K562 (cell line): ENCODE measurements at regions of chr15 and their contacts with region 1.

Region 1: DNA sequence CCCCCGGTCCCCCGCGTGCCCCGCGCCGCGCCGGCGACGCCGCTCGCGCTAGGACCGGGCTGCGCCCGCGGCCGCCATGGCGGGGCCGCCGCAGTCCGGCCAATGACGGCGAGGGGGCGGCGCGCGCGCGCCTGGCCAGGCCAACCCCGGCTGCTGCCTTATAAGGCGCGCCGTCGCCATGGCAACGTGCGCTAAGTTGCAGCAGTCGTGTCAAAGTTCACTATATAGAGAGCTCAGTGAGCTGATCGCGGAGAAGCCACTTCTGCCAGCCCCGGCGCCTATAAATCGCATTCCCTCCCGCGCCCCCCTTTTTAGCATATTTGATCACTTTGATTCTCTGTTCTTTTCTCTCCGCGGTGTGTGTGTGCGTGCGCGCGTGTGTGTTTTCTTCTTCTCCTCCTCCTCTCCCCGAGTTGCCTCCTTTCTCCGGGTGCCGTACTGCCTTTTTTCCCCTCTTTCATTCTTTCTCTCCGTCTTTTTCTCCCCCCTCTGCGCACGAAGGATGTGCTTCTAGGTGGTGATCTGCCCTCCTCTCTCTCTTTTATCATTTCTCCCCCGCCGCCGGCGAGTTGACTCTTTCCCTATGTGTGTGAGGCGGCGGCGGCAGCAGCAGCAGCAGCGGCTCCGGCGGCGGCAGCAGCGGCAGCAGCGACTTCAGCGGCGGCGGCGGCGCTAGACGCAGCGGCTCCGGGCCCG is at the start of gene NR2F2:
- DNase-seq: peak; percentile 93 to 99 (median 96)
- ATAC-seq: peak; percentile 68
- H3K4me3 ChIP-seq: peak within 1 kb of the TSS; percentile 71
- H3K27ac ChIP-seq: peak within 1 kb of the TSS; percentile 94
- H3K4me1 ChIP-seq: peaks cover 29 to 36% of the 10 kb centered on the region in 2 experiments
- H3K27me3 ChIP-seq: no peaks in the 10 kb centered on the region
- CTCF ChIP-seq: no peak
- EP300 ChIP-seq: no peak; the same call in 1 of the 2 replicates
- POLR2A ChIP-seq: peak; percentile 86
- RAD21 ChIP-seq: 0 out of 4 replicates have a peak, but pooled peaks of 1 of the 2 experiments have one; percentile 12
- polyA plus RNA-seq, gene NR2F2: 9.7 to 11.1 TPM

Region 2: DNA sequence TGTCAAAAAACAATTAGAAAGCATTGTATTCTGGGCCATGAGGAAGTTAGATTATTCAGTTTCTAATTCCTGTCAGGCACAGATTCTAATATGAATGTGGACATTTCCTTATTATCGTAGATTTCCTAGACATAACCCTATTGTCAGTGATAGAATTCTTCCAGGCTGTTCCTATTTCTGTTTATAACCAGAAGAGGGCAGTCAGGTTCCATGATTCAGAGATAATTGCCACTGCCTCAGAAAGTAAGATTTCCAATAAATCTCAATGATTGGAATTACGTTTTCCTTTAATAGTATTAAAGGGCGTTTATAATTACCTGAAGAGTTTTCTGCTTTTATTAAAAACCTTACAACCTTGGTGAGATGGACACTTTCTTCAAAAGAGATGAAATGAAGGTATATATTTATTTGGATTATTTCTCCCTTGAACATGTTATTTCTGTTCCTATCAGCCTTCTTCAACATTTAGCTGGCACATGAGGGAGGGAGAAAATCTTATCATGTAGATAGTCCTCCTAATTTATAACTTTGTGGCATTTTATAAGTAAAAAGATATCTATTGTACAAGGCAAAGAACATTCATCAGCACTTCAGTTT is 1660.1 kb before region 1 on chr15:
- CTCF ChIA-PET with region 1: no interaction called
- POLR2A ChIA-PET with region 1: no interaction called
- in situ Hi-C with region 1: no loop called
- intact Hi-C with region 1: loop called (anchors 10 kb)
- DNase-seq: peak; percentile 30 to 66 (median 44)
- ATAC-seq: peak; percentile 78
- H3K4me3 ChIP-seq: no peak overlapping the region
- H3K27ac ChIP-seq: no peak overlapping the region
- H3K4me1 ChIP-seq: no peaks in the 10 kb centered on the region; a peak in 1 of 5 replicates
- H3K27me3 ChIP-seq: peaks cover 4 to 28% of the 10 kb centered on the region in 2 experiments; a peak in 4 of 5 replicates
- CTCF ChIP-seq: peak; percentile 35 to 80 (median 54); a peak in 4 of 6 replicates
- EP300 ChIP-seq: no peak
- POLR2A ChIP-seq: no peak
- RAD21 ChIP-seq: peak; percentile 84 to 91

Region 3: GRCh38 chr15:95929232-95929846 is 401.3 kb before region 1 on chr15:
- CTCF ChIA-PET with region 1: no interaction called
- POLR2A ChIA-PET with region 1: interaction called, 5 read pairs
- in situ Hi-C with region 1: loop called (anchors 10 kb)
- intact Hi-C with region 1: loop called (anchors 2 kb)
- DNase-seq: peak; percentile 86 to 96 (median 86)
- ATAC-seq: peak; percentile 90
- H3K4me3 ChIP-seq: no peak overlapping the region
- H3K27ac ChIP-seq: peak overlapping the region; percentile 81
- H3K4me1 ChIP-seq: peaks cover 0 to 42% of the 10 kb centered on the region in 2 experiments; a peak in 4 of 5 replicates
- H3K27me3 ChIP-seq: no peaks in the 10 kb centered on the region
- CTCF ChIP-seq: no peak
- EP300 ChIP-seq: peak; percentile 99
- POLR2A ChIP-seq: no peak
- RAD21 ChIP-seq: peak; percentile 57 to 62

Region 4: DNA sequence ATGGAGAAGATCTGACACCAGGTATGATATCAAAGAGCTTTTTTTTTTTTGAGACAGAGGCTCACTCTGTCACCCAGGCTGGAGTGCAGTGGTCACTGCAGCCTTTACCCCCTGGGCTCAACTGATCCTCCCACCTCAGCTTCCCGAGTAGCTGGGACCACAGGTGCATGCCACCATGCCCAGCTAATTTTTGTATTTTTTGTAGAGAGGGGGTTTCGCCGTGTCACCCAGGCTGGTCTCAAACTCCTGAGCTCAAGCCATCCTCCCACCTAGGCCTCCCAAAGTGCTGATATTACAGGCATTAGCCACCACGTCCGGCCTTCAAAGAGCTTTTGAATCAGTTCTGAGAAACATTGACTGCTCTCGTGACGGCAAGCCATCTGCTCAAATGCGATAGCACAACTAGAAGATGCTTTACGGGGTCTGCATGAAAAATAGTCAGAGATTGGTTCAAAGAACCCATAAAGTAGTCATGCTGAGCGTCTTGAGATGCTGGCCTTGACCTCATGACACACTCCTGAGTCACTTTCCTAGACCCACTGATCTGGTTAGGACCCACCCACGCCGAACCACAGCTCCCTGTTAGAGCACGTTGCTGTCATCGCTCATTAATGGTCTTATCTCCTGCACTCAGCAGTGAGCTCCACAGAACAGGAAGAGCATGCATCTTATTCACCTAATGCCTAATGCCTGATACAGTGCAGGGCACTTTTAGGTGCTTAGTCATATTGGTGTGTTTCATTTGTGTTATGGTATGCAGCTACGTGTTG is 57.1 kb before region 1 on chr15:
- CTCF ChIA-PET with region 1: no interaction called
- POLR2A ChIA-PET with region 1: interaction called, 5 read pairs
- in situ Hi-C with region 1: no loop called
- intact Hi-C with region 1: loop called (anchors 1 kb)
- DNase-seq: peak; percentile 93 to 99 (median 93)
- ATAC-seq: peak; percentile 98
- H3K4me3 ChIP-seq: no peak overlapping the region
- H3K27ac ChIP-seq: peak overlapping the region; percentile 93
- H3K4me1 ChIP-seq: peaks cover 11 to 30% of the 10 kb centered on the region in 2 experiments
- H3K27me3 ChIP-seq: no peaks in the 10 kb centered on the region
- CTCF ChIP-seq: no peak
- EP300 ChIP-seq: peak; percentile 93
- POLR2A ChIP-seq: no peak
- RAD21 ChIP-seq: peak in 1 of 2 experiments; percentile 16; a peak in 2 of 4 replicates

Region 5: GRCh38 chr15:96421178-96421601 is 90.6 kb after region 1 on chr15:
- CTCF ChIA-PET with region 1: no interaction called
- POLR2A ChIA-PET with region 1: no interaction called
- in situ Hi-C with region 1: no loop called
- intact Hi-C with region 1: loop called (anchors 5 kb)
- DNase-seq: peak in 2 of 4 experiments; percentile 32 to 63
- ATAC-seq: peak; percentile 73
- H3K4me3 ChIP-seq: no peak overlapping the region
- H3K27ac ChIP-seq: peak overlapping the region; percentile 11; the same call in 1 of the 3 replicates
- H3K4me1 ChIP-seq: peaks cover 11 to 15% of the 10 kb centered on the region in 2 experiments; a peak in 4 of 5 replicates
- H3K27me3 ChIP-seq: peaks cover 2 to 12% of the 10 kb centered on the region in 2 experiments; a peak in 4 of 5 replicates
- CTCF ChIP-seq: no peak
- EP300 ChIP-seq: no peak
- POLR2A ChIP-seq: no peak
- RAD21 ChIP-seq: no peak

Region 6: DNA sequence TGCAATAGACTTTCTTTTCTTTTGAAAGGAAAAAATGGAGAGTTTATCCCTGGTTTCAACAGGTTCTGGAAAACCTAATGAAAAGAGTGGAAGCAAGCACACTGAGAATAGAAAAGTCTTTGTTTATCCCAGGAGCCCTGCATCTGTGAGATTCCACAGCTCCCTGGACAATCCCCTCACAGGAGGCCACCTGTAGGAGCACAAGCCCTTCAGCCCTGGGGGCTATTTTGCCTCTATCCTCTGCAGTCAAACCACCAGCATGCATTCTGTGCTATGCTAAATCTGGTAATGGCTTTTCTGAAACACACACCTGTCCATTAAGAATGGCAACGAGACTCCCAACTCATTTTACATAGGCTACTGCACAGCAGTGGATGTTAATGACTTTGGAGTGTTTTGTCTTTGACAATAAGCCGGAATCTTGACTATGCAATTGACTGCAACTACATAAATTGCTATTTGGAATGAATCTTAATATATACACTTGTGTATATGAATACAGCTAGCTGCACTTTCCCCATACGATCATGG is 369.3 kb after region 1 on chr15:
- CTCF ChIA-PET with region 1: no interaction called
- POLR2A ChIA-PET with region 1: no interaction called
- in situ Hi-C with region 1: no loop called
- intact Hi-C with region 1: loop called (anchors 5 kb)
- DNase-seq: no peak
- ATAC-seq: no peak
- H3K4me3 ChIP-seq: no peak overlapping the region
- H3K27ac ChIP-seq: no peak overlapping the region
- H3K4me1 ChIP-seq: no peaks in the 10 kb centered on the region
- H3K27me3 ChIP-seq: no peaks in the 10 kb centered on the region
- CTCF ChIP-seq: no peak
- EP300 ChIP-seq: no peak
- POLR2A ChIP-seq: no peak
- RAD21 ChIP-seq: no peak

Region 7: GRCh38 chr15:97960364-97961066 is 1629.9 kb after region 1 on chr15 and contains the start of gene ARRDC4:
- CTCF ChIA-PET with region 1: no interaction called
- POLR2A ChIA-PET with region 1: no interaction called
- in situ Hi-C with region 1: no loop called
- intact Hi-C with region 1: loop called (anchors 5 kb)
- DNase-seq: peak; percentile 92 to 99 (median 94)
- ATAC-seq: peak; percentile 97
- H3K4me3 ChIP-seq: peak within 1 kb of the TSS; percentile 70
- H3K27ac ChIP-seq: peak within 1 kb of the TSS; percentile 92
- H3K4me1 ChIP-seq: peaks cover 13 to 15% of the 10 kb centered on the region in 2 experiments; a peak in 4 of 5 replicates
- H3K27me3 ChIP-seq: no peaks in the 10 kb centered on the region
- CTCF ChIP-seq: no peak
- EP300 ChIP-seq: peak; percentile 74
- POLR2A ChIP-seq: peak; percentile 52
- RAD21 ChIP-seq: no peak
- polyA plus RNA-seq, gene ARRDC4: 4.3 to 4.8 TPM